ENCODE measurements at regions of chr19 and their contacts with region 1.

Region 1: GRCh38 chr19:1189419-1189818 is 15.4 kb upstream of the SBNO2 start:
- DNase-seq: no peak
- H3K4me3 ChIP-seq: no peak overlapping the region
- CTCF ChIP-seq: no peak

Region 2: DNA sequence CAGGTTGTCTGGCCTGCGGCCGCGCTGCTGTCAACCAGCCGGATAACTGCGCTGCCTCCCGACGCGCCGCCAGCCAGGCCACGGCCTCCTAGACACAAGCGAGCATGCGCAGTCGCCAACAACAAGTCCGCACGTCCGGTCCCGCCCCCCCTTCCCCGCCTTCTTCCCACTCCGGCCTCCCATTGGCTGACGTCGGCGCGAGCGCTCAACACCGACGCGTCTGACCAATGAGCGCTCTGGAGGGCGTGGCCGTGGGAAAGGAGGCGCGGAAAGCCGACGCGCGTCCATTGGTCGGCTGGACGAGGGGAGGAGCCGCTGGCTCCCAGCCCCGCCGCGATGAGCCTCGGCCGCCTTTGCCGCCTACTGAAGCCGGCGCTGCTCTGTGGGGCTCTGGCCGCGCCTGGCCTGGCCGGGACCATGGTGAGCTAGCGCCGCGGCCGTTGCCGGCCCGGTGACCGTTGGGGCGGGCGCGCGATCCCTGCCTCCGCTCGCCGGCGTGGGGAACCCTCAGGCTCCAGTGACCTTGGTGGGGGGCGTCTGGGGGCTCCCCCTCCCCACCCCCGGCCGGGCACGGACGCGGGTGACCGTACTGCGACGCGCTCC is 85.6 kb before region 1 on chr19 and contains the start of gene GPX4:
- CTCF ChIA-PET with region 1: interaction called, 10 read pairs
- POLR2A ChIA-PET with region 1: no interaction called
- DNase-seq: peak; percentile 93
- H3K4me3 ChIP-seq: peak within 1 kb of the TSS; percentile 78
- CTCF ChIP-seq: no peak

Region 3: DNA sequence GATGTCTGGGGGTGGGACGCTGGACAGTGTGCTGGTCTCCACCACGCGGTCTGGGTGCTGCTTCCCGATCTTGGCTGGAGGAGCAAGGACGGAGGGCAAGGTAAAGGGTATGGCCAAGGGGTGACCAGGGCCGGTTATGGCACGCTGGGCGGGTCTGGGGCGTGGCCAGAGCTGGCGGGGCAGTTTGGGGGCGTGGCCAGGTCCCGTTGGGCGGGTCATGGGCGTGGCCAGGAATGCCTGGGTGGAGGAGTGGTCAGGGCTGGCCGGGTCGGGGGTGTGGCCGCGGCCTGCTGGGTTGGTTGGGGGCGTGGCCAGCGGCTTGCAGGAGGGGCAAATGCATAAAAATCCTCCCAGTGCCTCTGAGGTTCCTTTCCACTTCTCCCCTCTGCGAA is 66.5 kb before region 1 on chr19:
- CTCF ChIA-PET with region 1: interaction called, 21 read pairs
- POLR2A ChIA-PET with region 1: no interaction called
- DNase-seq: no peak
- H3K4me3 ChIP-seq: no peak overlapping the region
- CTCF ChIP-seq: no peak

Region 4: GRCh38 chr19:1161716-1162115 is 27.7 kb before region 1 on chr19:
- CTCF ChIA-PET with region 1: no interaction called
- POLR2A ChIA-PET with region 1: no interaction called
- DNase-seq: no peak
- H3K4me3 ChIP-seq: no peak overlapping the region
- CTCF ChIP-seq: no peak

Region 5: DNA sequence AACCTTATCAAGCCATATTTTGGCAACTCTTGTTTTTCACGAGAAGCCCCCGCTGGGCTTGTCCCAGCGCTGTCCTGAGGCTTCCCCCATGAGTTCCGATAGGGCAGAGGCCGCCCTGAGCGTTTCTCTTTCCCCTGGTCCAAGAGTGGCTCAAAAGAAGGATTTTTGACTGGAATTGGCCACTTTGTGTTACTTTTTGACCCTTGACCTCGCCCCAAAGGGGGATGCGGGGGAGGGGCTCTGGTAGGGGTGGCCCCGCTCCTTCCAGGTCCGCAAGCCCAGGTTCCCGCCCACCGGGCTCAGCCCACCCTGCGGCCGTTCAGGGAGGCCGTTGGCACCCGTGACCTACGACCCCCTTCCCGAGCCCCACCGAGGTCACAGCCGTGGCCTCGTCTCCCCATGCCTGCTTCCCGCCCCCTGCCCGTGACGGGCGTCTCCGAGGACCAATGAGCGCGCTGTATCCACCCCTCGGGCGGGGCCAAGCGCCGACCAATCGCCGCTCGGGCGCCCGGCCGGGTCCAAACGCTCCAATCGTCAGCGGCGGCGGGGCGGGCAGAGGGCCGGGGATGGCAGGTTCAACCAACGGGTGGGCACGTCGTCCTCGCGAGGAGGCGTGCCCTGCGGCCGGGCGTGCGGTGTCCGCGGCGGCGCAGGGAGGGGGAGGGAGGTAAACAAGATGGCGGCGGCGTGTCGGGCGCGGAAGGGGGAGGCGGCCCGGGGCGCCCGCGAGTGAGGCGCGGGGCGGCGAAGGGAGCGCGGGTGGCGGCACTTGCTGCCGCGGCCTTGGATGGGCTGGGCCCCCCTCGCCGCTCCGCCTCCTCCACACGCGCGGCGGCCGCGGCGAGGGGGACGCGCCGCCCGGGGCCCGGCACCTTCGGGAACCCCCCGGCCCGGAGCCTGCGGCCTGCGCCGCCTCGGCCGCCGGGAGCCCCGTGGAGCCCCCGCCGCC is 16.0 kb after region 1 on chr19 and contains the start of gene STK11:
- CTCF ChIA-PET with region 1: interaction called, 27 read pairs
- POLR2A ChIA-PET with region 1: no interaction called
- DNase-seq: peak; percentile 65
- H3K4me3 ChIP-seq: peak within 1 kb of the TSS; percentile 75
- CTCF ChIP-seq: no peak